Activated naive CD4-positive, alpha-beta T cell treated with anti-CD3 and anti-CD28 coated beads for 36 hours (primary cell): ENCODE measurements at regions of chr14 and their contacts with region 1.

Region 1: GRCh38 chr14:20400965-20401593 is 12.2 kb downstream of the TEP1 start:
- DNase-seq: peak; percentile 43
- H3K4me3 Mint-ChIP-seq: peak overlapping the region; percentile 56
- H3K27ac Mint-ChIP-seq: peak overlapping the region; percentile 98
- H3K4me1 Mint-ChIP-seq: peaks cover 28% of the 10 kb centered on the region
- H3K27me3 Mint-ChIP-seq: no peaks in the 10 kb centered on the region

Region 2: GRCh38 chr14:20295067-20295466 is 106.0 kb before region 1 on chr14:
- CTCF ChIA-PET with region 1: no interaction called
- intact Hi-C with region 1: no loop called
- DNase-seq: peak; percentile 10
- H3K4me3 Mint-ChIP-seq: no peak overlapping the region
- H3K27ac Mint-ChIP-seq: no peak overlapping the region
- H3K4me1 Mint-ChIP-seq: peaks cover 2% of the 10 kb centered on the region
- H3K27me3 Mint-ChIP-seq: no peaks in the 10 kb centered on the region

Region 3: DNA sequence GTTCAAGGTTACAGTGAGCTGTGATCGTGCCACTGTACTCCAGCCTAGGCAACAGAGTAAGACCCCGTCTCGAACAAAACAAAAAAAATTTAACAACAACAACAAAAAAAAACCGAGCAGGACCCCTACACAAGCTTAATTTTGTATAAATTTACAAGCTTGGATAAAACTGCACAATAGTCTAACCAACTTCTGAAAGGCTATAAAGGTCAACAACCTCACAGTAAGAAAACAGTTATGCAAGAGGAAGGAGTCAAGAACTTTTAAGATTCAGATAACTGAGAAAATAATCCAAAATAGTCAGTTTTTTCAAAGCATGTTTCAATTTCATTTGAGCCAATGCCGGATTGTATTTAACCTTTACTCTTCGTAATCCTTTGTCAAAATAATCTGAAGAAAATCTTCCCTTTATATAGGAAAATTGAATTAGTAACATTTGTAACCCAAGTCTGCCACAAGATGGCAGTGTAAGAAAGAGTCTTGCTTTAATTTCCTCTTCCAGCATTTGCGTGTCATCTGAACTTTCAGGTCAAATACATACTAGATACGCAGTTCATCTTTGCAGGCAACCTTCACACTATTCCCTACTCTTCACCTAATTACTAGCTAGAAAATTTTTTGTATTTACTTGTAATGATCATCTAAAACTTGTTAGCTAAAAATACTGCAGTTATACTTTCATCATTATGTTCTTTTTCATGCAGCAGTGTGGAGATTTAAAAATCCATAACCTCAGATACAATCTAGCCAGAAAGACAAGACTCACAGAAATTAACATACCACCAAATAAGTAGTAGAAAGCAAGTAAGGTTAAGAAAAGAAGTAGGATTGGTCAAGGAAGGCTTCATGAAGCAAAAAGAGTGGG is 73.8 kb before region 1 on chr14:
- CTCF ChIA-PET with region 1: interaction called, 12 read pairs
- intact Hi-C with region 1: no loop called
- DNase-seq: peak; percentile 38
- H3K4me3 Mint-ChIP-seq: no peak overlapping the region
- H3K27ac Mint-ChIP-seq: peak overlapping the region; percentile 57
- H3K4me1 Mint-ChIP-seq: peaks cover 45% of the 10 kb centered on the region
- H3K27me3 Mint-ChIP-seq: no peaks in the 10 kb centered on the region

Region 4: DNA sequence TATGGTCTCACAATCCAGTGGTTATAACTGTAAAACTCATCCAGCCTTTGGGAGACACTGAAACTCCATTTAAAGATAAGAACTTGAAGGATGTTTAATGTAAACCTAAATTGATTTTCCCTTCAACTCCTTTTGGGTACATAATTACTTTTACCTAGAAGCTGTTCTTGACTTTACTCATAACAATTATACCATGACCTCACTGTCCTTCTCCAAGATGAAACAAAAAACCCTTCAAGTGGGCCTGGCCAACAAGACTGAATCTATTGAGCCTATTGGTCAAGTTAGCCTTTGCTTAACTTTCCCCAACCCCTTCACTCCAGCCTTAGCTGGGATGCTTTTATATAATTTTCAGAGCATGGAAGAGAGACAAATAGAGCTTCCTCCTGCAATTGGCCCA is 35.2 kb before region 1 on chr14:
- CTCF ChIA-PET with region 1: interaction called, 6 read pairs
- intact Hi-C with region 1: loop called (anchors 1 kb)
- DNase-seq: no peak
- H3K4me3 Mint-ChIP-seq: no peak overlapping the region
- H3K27ac Mint-ChIP-seq: no peak overlapping the region
- H3K4me1 Mint-ChIP-seq: peaks cover 23% of the 10 kb centered on the region
- H3K27me3 Mint-ChIP-seq: no peaks in the 10 kb centered on the region

Region 5: DNA sequence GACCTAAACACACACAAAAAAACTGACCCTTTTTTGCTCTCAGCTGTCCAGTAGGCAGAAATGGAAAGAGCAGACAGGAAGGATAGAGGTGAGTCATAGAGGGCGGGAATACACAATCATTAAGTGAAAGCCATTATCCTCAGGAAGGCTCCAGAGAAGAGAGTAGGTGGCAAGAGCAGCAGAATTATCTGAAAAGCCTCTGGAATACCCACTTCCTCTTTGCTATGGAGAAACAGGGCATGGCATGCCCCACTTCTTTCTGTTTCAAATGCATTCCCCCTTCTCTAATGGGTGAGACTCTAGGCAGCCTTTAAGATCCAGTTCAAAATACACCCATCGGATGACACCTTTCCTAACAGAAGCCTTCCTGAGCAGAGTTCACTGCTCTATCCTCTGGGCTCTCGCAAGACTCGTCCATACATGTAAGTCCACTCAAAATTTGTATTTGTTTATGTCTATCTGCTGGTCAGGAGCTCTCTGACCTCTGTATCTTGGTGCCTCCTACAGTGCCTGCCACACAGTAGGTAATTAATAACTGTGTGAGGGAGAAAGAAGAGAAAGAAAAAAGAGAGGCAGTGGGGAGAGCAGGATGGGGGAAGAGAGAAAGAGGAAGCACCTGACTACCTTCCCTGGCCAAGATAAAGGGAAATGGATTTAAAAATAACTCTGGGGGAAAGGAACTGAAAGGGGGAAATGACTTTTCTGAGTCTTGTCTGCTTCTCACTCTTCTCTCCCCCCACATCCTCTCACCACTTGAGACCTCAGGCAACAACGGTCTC is 26.3 kb after region 1 on chr14:
- CTCF ChIA-PET with region 1: no interaction called
- intact Hi-C with region 1: no loop called
- DNase-seq: peak; percentile 18
- H3K4me3 Mint-ChIP-seq: peak overlapping the region; percentile 0
- H3K27ac Mint-ChIP-seq: peak overlapping the region; percentile 79
- H3K4me1 Mint-ChIP-seq: peaks cover 24% of the 10 kb centered on the region
- H3K27me3 Mint-ChIP-seq: no peaks in the 10 kb centered on the region

Region 6: GRCh38 chr14:20461274-20462001 is 60.4 kb after region 1 on chr14 and contains the start of gene PIP4P1:
- CTCF ChIA-PET with region 1: no interaction called
- intact Hi-C with region 1: loop called (anchors 1 kb)
- DNase-seq: peak; percentile 99
- H3K4me3 Mint-ChIP-seq: peak within 1 kb of the TSS; percentile 92
- H3K27ac Mint-ChIP-seq: peak within 1 kb of the TSS; percentile 96
- H3K4me1 Mint-ChIP-seq: peaks cover 29% of the 10 kb centered on the region
- H3K27me3 Mint-ChIP-seq: no peaks in the 10 kb centered on the region
- total RNA-seq, gene PIP4P1: 31.6 to 32.3 TPM

Region 7: GRCh38 chr14:21263656-21264411 is 862.8 kb after region 1 on chr14:
- CTCF ChIA-PET with region 1: no interaction called
- intact Hi-C with region 1: loop called (anchors 2 kb)
- DNase-seq: no peak
- H3K4me3 Mint-ChIP-seq: peak overlapping the region; percentile 100
- H3K27ac Mint-ChIP-seq: peak overlapping the region; percentile 100
- H3K4me1 Mint-ChIP-seq: peaks cover 68% of the 10 kb centered on the region
- H3K27me3 Mint-ChIP-seq: no peaks in the 10 kb centered on the region